Activated T-helper 2 cell treated with anti-CD3 and anti-CD28 coated beads, Interferon-gamma antibody, Interleukin-2, Interleukin-4, amounts not matched to agents 10 μg/mL and 5 μg/mL and 100 μg/mL, durations not matched to agents 14 hours and 24 hours and 36 hours (primary cell): ENCODE measurements at regions of chr5 and their contacts with region 1.

Region 1: GRCh38 chr5:115625579-115626444 is at the start of gene TMED7:
- DNase-seq: peak; percentile 98
- H3K4me3 Mint-ChIP-seq: no peak within 1 kb of the TSS
- H3K27ac Mint-ChIP-seq: peak within 1 kb of the TSS; percentile 89
- H3K4me1 Mint-ChIP-seq: peaks cover 20% of the 10 kb centered on the region
- H3K27me3 Mint-ChIP-seq: peaks cover 13% of the 10 kb centered on the region
- total RNA-seq, gene TMED7: 40.2 and 40.9 TPM in 2 replicates

Region 2: GRCh38 chr5:115601701-115602590 is 23.9 kb before region 1 on chr5 and contains the start of gene TICAM2:
- intact Hi-C with region 1: loop called (anchors 1 kb)
- DNase-seq: peak; percentile 48
- H3K4me3 Mint-ChIP-seq: peak within 1 kb of the TSS; percentile 68
- H3K27ac Mint-ChIP-seq: peak within 1 kb of the TSS; percentile 67
- H3K4me1 Mint-ChIP-seq: peaks cover 24% of the 10 kb centered on the region
- H3K27me3 Mint-ChIP-seq: peaks cover 6% of the 10 kb centered on the region
- total RNA-seq, gene TICAM2: 0.85 TPM in 1 of 2 replicates, not detected in the other

Region 3: GRCh38 chr5:115673596-115673995 is 47.8 kb after region 1 on chr5:
- intact Hi-C with region 1: no loop called
- DNase-seq: no peak
- H3K4me3 Mint-ChIP-seq: no peak overlapping the region
- H3K27ac Mint-ChIP-seq: no peak overlapping the region
- H3K4me1 Mint-ChIP-seq: no peaks in the 10 kb centered on the region
- H3K27me3 Mint-ChIP-seq: peaks cover 27% of the 10 kb centered on the region

Region 4: GRCh38 chr5:115884704-115885103 is 258.9 kb after region 1 on chr5:
- intact Hi-C with region 1: no loop called
- DNase-seq: no peak
- H3K4me3 Mint-ChIP-seq: no peak overlapping the region
- H3K27ac Mint-ChIP-seq: no peak overlapping the region
- H3K4me1 Mint-ChIP-seq: no peaks in the 10 kb centered on the region
- H3K27me3 Mint-ChIP-seq: no peaks in the 10 kb centered on the region